ENCODE measurements at regions of chr14 and their contacts with region 1.

Region 1: GRCh38 chr14:51860164-51860824 is at the start of gene GNG2:
- DNase-seq: peak; percentile 90
- H3K4me3 Mint-ChIP-seq: peak within 1 kb of the TSS; percentile 84
- H3K27ac Mint-ChIP-seq: peak within 1 kb of the TSS; percentile 94
- H3K4me1 Mint-ChIP-seq: peaks cover 48% of the 10 kb centered on the region
- H3K27me3 Mint-ChIP-seq: no peaks in the 10 kb centered on the region
- total RNA-seq, gene GNG2: 296 to 304 TPM

Region 2: DNA sequence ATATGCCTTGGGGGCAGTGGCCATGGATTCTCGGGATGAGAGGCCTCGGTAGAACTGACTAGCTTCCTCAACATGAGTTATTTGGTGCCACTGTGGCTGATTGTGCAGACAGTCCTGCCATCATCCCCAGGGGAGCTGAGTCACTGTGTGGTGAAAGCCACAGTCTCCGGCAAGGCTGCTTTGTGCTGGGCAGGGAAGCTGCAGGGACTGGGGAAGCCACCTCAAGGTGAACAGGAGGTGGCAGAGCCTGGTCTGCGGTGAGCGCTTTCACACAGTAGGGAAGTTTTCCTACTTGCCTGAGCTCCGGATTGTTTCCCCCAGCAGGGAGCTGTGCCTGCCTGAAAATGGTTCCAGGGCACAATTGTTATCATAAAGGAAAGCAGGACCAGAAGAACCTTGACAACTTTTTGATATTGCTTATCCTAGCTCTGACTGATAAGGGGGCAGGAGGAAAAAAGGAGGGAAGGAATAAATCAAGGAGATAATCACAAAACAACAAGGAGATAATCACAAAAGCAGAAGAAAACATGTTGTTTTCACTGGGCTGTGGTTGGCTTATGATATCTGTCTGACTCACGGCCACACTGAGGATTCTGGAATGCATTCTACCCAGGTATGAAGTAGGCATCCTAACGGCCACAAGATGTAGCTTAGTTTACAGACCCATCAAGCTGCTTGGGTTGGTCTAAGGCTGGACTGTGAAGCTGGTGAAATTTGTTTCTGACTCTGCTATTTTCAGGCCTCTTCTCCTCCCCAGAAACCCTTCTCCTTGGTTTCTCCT is 32.1 kb before region 1 on chr14:
- CTCF ChIA-PET with region 1: interaction called, 7 read pairs
- POLR2A ChIA-PET with region 1: interaction called, 19 read pairs
- DNase-seq: peak; percentile 82
- H3K4me3 Mint-ChIP-seq: no peak overlapping the region
- H3K27ac Mint-ChIP-seq: no peak overlapping the region
- H3K4me1 Mint-ChIP-seq: no peaks in the 10 kb centered on the region
- H3K27me3 Mint-ChIP-seq: peaks cover 3% of the 10 kb centered on the region

Region 3: DNA sequence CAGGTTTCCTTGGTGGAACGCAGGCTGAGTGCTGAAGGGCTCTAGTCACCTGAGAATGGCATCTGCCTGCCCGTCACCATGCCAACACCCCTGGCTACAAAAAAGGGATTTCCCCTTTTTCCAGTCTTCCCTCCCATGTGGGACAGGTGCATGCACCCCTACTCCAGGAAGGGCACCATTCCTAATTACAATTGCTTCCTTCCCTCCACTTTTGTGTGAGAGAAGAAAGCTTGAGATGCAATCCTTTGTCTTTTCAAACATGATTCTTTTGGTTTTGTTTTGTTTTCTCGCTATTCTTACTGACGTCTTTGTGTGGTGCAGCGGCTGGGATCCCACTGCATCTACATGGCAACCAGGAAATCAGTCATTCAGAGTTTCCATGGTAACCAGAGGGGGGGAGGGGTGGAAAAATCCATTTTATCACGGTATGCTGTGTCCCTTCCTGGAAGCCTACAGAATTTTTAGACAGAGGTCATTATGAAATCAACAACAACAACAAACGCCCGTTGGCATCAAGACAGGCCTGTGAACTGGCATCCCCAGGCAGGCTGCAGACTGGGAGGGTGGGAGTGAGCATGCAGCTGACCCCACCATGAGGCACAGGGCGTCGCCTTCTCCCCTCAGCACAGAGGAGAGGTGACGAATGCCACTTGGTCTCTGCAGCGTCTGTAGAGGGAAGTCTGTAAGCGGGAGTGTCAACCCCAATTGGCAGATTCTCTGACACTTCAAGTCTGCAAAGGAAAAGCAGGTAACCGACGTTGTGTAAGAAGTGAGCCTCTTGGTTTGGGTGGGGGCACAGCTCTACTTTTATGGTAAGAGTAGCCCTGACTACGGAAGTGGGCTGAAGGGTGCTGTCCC is 13.4 kb before region 1 on chr14:
- CTCF ChIA-PET with region 1: interaction called, 43 read pairs
- POLR2A ChIA-PET with region 1: interaction called, 407 read pairs
- DNase-seq: peak; percentile 91
- H3K4me3 Mint-ChIP-seq: peak overlapping the region; percentile 75
- H3K27ac Mint-ChIP-seq: peak overlapping the region; percentile 98
- H3K4me1 Mint-ChIP-seq: peaks cover 74% of the 10 kb centered on the region
- H3K27me3 Mint-ChIP-seq: no peaks in the 10 kb centered on the region

Region 4: GRCh38 chr14:51873221-51873893 is 13.1 kb after region 1 on chr14:
- CTCF ChIA-PET with region 1: interaction called, 3 read pairs
- POLR2A ChIA-PET with region 1: interaction called, 78 read pairs
- DNase-seq: peak; percentile 43
- H3K4me3 Mint-ChIP-seq: no peak overlapping the region
- H3K27ac Mint-ChIP-seq: peak overlapping the region; percentile 60
- H3K4me1 Mint-ChIP-seq: peaks cover 58% of the 10 kb centered on the region
- H3K27me3 Mint-ChIP-seq: no peaks in the 10 kb centered on the region

Region 5: GRCh38 chr14:51884086-51884927 is 24.0 kb after region 1 on chr14:
- CTCF ChIA-PET with region 1: no interaction called
- POLR2A ChIA-PET with region 1: interaction called, 27 read pairs
- DNase-seq: no peak
- H3K4me3 Mint-ChIP-seq: no peak overlapping the region
- H3K27ac Mint-ChIP-seq: peak overlapping the region; percentile 61
- H3K4me1 Mint-ChIP-seq: peaks cover 61% of the 10 kb centered on the region
- H3K27me3 Mint-ChIP-seq: no peaks in the 10 kb centered on the region

Region 6: GRCh38 chr14:51901475-51902024 is 41.3 kb after region 1 on chr14:
- CTCF ChIA-PET with region 1: no interaction called
- POLR2A ChIA-PET with region 1: interaction called, 18 read pairs
- DNase-seq: no peak
- H3K4me3 Mint-ChIP-seq: no peak overlapping the region
- H3K27ac Mint-ChIP-seq: no peak overlapping the region
- H3K4me1 Mint-ChIP-seq: peaks cover 23% of the 10 kb centered on the region
- H3K27me3 Mint-ChIP-seq: no peaks in the 10 kb centered on the region

Region 7: DNA sequence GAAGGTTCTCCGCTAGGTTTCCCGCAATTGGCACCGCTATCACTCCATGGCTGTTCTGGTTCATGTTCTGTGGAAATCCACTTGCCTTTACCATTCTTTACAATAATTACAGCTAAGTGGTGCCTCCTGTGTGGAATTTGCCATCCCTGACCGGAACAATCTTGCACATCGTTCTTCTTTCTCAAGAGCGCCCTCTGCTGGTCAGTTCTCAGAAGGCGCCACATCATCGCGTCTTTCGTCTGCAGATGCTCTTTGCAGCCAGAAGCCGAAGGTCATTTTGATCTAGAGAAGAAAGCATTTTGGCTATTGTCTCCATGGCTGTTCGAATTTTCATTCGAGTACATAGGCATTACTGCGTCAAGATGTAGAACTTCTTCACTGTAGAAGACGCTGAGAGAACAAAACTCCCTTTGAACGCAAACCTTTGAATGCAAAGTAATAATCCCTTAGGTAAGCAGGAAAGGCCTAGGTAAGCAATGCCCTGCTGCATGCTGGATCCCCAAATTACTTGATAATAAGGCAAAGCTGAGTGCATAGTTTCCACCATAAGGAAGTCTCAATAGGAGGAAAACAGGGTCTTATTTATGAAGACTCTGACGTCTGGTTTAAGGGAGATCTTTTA is 118.9 kb after region 1 on chr14:
- CTCF ChIA-PET with region 1: interaction called, 11 read pairs
- POLR2A ChIA-PET with region 1: interaction called, 12 read pairs
- DNase-seq: peak; percentile 83
- H3K4me3 Mint-ChIP-seq: no peak overlapping the region
- H3K27ac Mint-ChIP-seq: no peak overlapping the region
- H3K4me1 Mint-ChIP-seq: peaks cover 23% of the 10 kb centered on the region
- H3K27me3 Mint-ChIP-seq: peaks cover 1% of the 10 kb centered on the region

Measured in activated CD4-positive, alpha-beta memory T cell treated with anti-CD3 and anti-CD28 coated beads, Interleukin-2, amount 10 ng/mL, durations not matched to agents 7 days and 5 days (primary cell).